ENCODE measurements at regions of chr16 and their contacts with region 1.

Region 1: GRCh38 chr16:70523076-70523742 is at the start of gene COG4:
- DNase-seq: peak; percentile 94
- ATAC-seq: peak; percentile 85
- H3K4me3 ChIP-seq: peak within 1 kb of the TSS; percentile 74 to 100 (median 87)
- H3K4me3 Mint-ChIP-seq: peak within 1 kb of the TSS; percentile 94
- H3K27ac ChIP-seq: peak within 1 kb of the TSS; percentile 85 to 92
- H3K27ac Mint-ChIP-seq: peak within 1 kb of the TSS; percentile 96
- H3K4me1 ChIP-seq: peaks cover 26 to 35% of the 10 kb centered on the region in 2 donors
- H3K4me1 Mint-ChIP-seq: peaks cover 44% of the 10 kb centered on the region
- H3K27me3 ChIP-seq: no peaks in the 10 kb centered on the region
- H3K27me3 Mint-ChIP-seq: no peaks in the 10 kb centered on the region
- CTCF ChIP-seq: no peak
- total RNA-seq, gene COG4: 55.9 and 60.6 TPM in 2 replicates

Region 2: DNA sequence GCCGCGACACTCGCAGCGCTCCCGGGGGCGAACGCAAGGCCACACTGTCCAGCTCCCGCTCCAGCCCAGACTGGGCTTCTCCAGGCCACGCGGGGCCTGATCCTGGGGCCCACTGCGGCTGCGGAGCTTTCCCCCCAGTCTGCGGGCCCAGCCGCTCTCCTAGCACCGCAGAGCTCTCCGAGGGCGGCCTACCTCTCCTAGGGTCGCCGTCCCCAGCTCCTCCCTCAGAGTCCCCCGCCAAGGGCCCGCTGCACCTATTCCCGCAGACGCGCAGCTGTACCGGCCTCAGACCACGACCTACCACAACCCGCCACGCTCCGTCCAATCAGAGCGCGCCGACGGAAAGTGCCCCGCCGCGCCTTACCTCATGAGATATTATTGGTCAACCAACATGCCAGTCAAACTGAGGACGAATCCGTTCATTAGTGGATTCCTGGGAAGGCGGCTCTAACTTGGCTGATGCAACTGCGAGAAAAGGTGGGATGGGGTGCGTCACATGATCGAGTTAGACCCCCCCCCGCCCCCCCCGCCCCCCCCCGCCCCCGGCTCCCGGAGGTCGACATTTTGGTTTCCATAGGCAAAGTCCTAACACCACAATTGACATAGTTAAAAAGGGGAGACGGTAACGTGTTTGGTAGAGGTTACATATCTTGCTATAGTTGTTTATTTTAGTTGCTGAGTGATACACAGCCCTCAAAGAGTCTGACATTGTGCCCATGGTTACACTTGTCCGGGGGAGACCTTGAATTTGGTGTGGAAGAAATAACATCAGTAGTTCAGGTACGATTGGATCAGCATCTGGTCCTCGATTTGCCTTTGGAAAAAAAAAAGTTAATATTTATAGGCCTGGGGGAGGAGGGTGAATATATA is 233.7 kb before region 1 on chr16 and contains the start of gene AARS1:
- CTCF ChIA-PET with region 1: no interaction called
- POLR2A ChIA-PET with region 1: no interaction called
- intact Hi-C with region 1: loop called (anchors 5 kb)
- DNase-seq: peak; percentile 98
- ATAC-seq: peak; percentile 97
- H3K4me3 ChIP-seq: peak within 1 kb of the TSS; percentile 80 to 91 (median 86)
- H3K4me3 Mint-ChIP-seq: peak within 1 kb of the TSS; percentile 99
- H3K27ac ChIP-seq: peak within 1 kb of the TSS; percentile 79 to 90
- H3K27ac Mint-ChIP-seq: peak within 1 kb of the TSS; percentile 96
- H3K4me1 ChIP-seq: peaks cover 0 to 16% of the 10 kb centered on the region in 2 donors
- H3K4me1 Mint-ChIP-seq: peaks cover 15% of the 10 kb centered on the region
- H3K27me3 ChIP-seq: no peaks in the 10 kb centered on the region
- H3K27me3 Mint-ChIP-seq: no peaks in the 10 kb centered on the region
- CTCF ChIP-seq: no peak
- total RNA-seq, gene AARS1: 54.4 and 57.8 TPM in 2 replicates

Region 3: DNA sequence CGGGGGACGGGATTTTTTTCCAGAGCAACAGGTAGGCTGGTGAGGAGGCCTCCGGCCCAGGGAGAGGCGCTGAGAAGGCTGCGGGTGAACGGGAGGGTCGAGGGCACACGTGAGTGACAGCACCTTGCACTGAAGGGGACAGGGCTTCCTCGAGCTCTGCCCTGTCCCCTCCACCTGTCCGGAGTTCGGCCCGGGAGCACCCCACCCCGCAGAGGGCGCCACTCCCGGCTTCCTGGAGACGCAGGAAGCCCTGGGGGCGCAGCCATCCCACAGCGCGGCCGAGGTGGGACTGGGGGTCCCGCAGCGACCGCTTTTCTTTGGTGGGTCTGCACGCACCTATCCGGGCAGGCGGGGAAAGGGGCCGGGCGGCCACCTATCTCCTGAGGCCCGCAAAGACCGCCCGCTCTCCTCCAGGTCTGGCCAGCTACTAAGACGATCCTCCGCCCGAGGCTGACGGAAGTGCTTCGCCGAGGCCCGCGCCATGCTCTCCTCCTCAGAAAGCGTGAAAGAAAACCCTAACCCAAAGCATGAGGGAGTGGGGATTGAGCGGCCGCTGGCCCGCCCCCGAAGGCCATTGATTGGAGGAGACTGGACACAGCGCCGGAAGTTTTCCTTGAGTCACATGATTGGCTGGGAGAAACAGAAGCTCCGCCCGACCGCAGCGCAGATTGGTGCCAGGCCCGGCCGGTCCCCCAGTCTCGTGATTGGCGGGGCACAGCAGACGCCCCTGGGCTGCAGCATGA is 142.2 kb before region 1 on chr16:
- CTCF ChIA-PET with region 1: interaction called, 6 read pairs
- POLR2A ChIA-PET with region 1: interaction called, 15 read pairs
- intact Hi-C with region 1: loop called (anchors 1 kb)
- DNase-seq: peak; percentile 96
- ATAC-seq: peak; percentile 93
- H3K4me3 ChIP-seq: peak overlapping the region; percentile 58 to 89 (median 74)
- H3K4me3 Mint-ChIP-seq: peak overlapping the region; percentile 97
- H3K27ac ChIP-seq: peak overlapping the region; percentile 64 to 81
- H3K27ac Mint-ChIP-seq: peak overlapping the region; percentile 95
- H3K4me1 ChIP-seq: peaks cover 18 to 25% of the 10 kb centered on the region in 2 donors
- H3K4me1 Mint-ChIP-seq: peaks cover 8% of the 10 kb centered on the region
- H3K27me3 ChIP-seq: no peaks in the 10 kb centered on the region
- H3K27me3 Mint-ChIP-seq: no peaks in the 10 kb centered on the region
- CTCF ChIP-seq: no peak

Region 4: GRCh38 chr16:70438969-70439862 is 84.0 kb before region 1 on chr16 and contains the start of gene ST3GAL2:
- CTCF ChIA-PET with region 1: no interaction called
- POLR2A ChIA-PET with region 1: no interaction called
- intact Hi-C with region 1: loop called (anchors 1 kb)
- DNase-seq: peak; percentile 93
- ATAC-seq: peak; percentile 97
- H3K4me3 ChIP-seq: peak within 1 kb of the TSS; percentile 67 to 82 (median 73)
- H3K4me3 Mint-ChIP-seq: peak within 1 kb of the TSS; percentile 91
- H3K27ac ChIP-seq: peak within 1 kb of the TSS; percentile 47 to 51
- H3K27ac Mint-ChIP-seq: peak within 1 kb of the TSS; percentile 90
- H3K4me1 ChIP-seq: peaks cover 34 to 40% of the 10 kb centered on the region in 2 donors
- H3K4me1 Mint-ChIP-seq: peaks cover 39% of the 10 kb centered on the region
- H3K27me3 ChIP-seq: no peaks in the 10 kb centered on the region
- H3K27me3 Mint-ChIP-seq: no peaks in the 10 kb centered on the region
- CTCF ChIP-seq: no peak
- total RNA-seq, gene ST3GAL2: 71.3 and 77.1 TPM in 2 replicates

Region 5: GRCh38 chr16:70454222-70455034 is 68.8 kb before region 1 on chr16 and contains the start of gene FCSK:
- CTCF ChIA-PET with region 1: no interaction called
- POLR2A ChIA-PET with region 1: no interaction called
- intact Hi-C with region 1: loop called (anchors 5 kb)
- DNase-seq: peak; percentile 91
- ATAC-seq: peak; percentile 96
- H3K4me3 ChIP-seq: peak within 1 kb of the TSS; percentile 79 to 97 (median 89)
- H3K4me3 Mint-ChIP-seq: peak within 1 kb of the TSS; percentile 94
- H3K27ac ChIP-seq: peak within 1 kb of the TSS; percentile 94 to 97
- H3K27ac Mint-ChIP-seq: peak within 1 kb of the TSS; percentile 92
- H3K4me1 ChIP-seq: peaks cover 10 to 17% of the 10 kb centered on the region in 2 donors
- H3K4me1 Mint-ChIP-seq: peaks cover 20% of the 10 kb centered on the region
- H3K27me3 ChIP-seq: no peaks in the 10 kb centered on the region
- H3K27me3 Mint-ChIP-seq: peaks cover 5% of the 10 kb centered on the region
- CTCF ChIP-seq: peak; percentile 40
- total RNA-seq, gene FCSK: 24.8 and 24.9 TPM in 2 replicates

Region 6: DNA sequence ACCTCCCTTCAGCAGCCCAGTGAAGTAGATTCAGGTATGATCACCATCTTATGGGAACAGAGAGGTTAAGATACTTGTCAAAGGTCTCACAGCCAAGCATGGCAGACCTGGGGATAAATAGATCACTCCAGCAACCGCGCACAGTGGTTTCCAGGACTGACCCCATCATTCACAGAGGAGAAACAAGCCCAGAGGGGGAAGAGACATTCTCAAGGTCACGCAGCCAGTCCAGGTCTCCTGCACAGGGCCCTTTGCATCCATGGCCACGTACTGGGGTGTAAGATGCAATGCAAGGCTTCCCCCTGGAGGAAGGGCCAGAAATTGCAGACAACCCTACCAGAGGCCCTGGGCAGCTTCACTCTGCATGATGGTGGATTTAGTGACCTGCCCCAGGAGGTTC is 898.7 kb after region 1 on chr16:
- CTCF ChIA-PET with region 1: no interaction called
- POLR2A ChIA-PET with region 1: no interaction called
- intact Hi-C with region 1: no loop called
- DNase-seq: peak; percentile 33
- ATAC-seq: no peak
- H3K4me3 ChIP-seq: no peak overlapping the region
- H3K4me3 Mint-ChIP-seq: no peak overlapping the region
- H3K27ac ChIP-seq: no peak overlapping the region
- H3K27ac Mint-ChIP-seq: no peak overlapping the region
- H3K4me1 ChIP-seq: peaks cover 0 to 4% of the 10 kb centered on the region in 2 donors
- H3K4me1 Mint-ChIP-seq: peaks cover 4% of the 10 kb centered on the region
- H3K27me3 ChIP-seq: peaks cover 0 to 29% (median 5%) of the 10 kb centered on the region in 4 experiments
- H3K27me3 Mint-ChIP-seq: peaks cover 45% of the 10 kb centered on the region
- CTCF ChIP-seq: peak; percentile 43

Measured in B cell (primary cell).